ENCODE measurements at regions of chr22 and their contacts with region 1.

Region 1: GRCh38 chr22:35886309-35886708 is 142.3 kb downstream of the RBFOX2 start:
- H3K4me3 ChIP-seq: no peak overlapping the region
- H3K27ac ChIP-seq: no peak overlapping the region
- H3K4me1 ChIP-seq: peaks cover 8% of the 10 kb centered on the region
- CTCF ChIP-seq: no peak

Region 2: GRCh38 chr22:35977136-35977535 is 90.8 kb after region 1 on chr22:
- CTCF ChIA-PET with region 1: no interaction called
- POLR2A ChIA-PET with region 1: interaction called, 12 read pairs
- H3K4me3 ChIP-seq: no peak overlapping the region
- H3K27ac ChIP-seq: no peak overlapping the region
- H3K4me1 ChIP-seq: peaks cover 13% of the 10 kb centered on the region
- CTCF ChIP-seq: no peak